ENCODE measurements at regions of chr7 and their contacts with region 1.

Region 1: DNA sequence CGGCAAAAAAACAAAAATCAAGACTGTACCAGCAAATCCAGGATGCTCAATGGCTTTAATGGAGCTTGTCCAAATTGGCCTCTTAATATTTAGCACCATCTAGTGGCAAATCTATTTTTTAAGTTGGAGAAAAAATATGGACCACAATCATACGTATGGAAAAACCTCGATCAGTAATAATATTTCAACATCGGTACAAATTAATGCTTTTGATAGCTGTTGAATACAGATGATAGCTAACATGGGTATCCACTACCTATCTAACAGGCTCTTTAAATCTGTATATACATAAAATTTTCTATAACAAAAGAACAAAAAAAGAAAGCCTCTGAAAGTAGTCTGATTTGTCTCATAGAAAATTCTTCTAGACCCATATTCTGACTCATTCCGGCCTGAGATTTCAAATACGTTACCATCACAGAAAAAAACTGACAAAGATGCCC is 29.2 kb downstream of the COA1 start:
- DNase-seq: no peak
- ATAC-seq: peak; percentile 42
- H3K4me3 Mint-ChIP-seq: no peak overlapping the region
- H3K27ac Mint-ChIP-seq: no peak overlapping the region
- H3K4me1 Mint-ChIP-seq: peaks cover 56% of the 10 kb centered on the region
- H3K27me3 Mint-ChIP-seq: no peaks in the 10 kb centered on the region

Region 2: DNA sequence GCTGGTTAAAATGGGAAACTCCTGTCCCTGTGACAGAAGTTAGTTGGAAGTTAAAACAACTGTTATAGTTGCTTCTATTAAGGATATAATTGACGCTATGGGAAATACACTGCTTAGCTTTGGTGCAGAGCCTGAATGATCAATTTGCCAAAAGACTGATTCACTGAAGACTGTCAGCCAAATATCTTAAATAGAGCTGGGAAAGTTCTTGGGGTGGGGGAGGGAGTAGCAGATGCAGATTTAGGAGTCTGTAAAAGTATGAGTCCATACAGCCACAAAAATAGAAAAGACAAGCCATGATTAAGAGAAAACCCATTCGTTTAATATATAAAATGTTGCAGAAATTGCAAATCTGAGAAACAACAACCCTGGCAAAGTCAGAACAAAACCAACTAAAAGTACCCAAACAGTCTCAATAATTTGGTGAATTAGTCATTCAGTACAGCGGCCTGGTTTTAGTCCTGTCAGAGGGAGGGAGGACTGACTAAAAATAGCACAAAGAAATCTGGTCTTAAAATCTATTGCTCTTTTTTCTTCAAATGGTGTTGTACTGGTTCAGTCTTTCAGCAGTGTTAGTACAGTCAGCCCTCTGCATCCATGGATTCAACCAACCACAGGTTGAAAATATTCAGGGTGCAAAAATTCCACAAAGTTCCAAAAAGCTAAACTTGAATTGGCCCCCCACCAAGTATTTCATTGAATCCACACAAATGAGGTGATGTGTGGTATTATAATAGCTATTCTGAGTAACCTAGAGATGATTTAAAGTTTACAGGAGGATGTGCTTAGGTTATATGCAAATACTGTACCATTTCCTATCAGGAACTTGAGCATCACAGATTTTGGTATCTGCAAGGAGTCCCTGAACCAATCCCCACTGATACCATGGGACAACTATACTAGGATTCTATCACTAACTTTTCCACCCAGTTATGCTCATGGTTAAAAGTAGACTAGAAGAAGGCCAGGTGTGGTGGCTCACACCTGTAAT is 87.2 kb before region 1 on chr7:
- CTCF ChIA-PET with region 1: interaction called, 16 read pairs
- POLR2A ChIA-PET with region 1: no interaction called
- intact Hi-C with region 1: no loop called
- DNase-seq: peak; percentile 33
- ATAC-seq: peak; percentile 86
- H3K4me3 Mint-ChIP-seq: peak overlapping the region; percentile 10
- H3K27ac Mint-ChIP-seq: peak overlapping the region; percentile 87
- H3K4me1 Mint-ChIP-seq: peaks cover 73% of the 10 kb centered on the region
- H3K27me3 Mint-ChIP-seq: no peaks in the 10 kb centered on the region

Region 3: GRCh38 chr7:43625453-43625852 is 74.6 kb before region 1 on chr7:
- CTCF ChIA-PET with region 1: interaction called, 19 read pairs
- POLR2A ChIA-PET with region 1: interaction called, 5 read pairs
- intact Hi-C with region 1: loop called in 1 of 2 experiments (anchors 2 kb)
- DNase-seq: peak; percentile 60
- ATAC-seq: peak; percentile 62
- H3K4me3 Mint-ChIP-seq: peak overlapping the region; percentile 7
- H3K27ac Mint-ChIP-seq: peak overlapping the region; percentile 63
- H3K4me1 Mint-ChIP-seq: peaks cover 91% of the 10 kb centered on the region
- H3K27me3 Mint-ChIP-seq: no peaks in the 10 kb centered on the region

Region 4: GRCh38 chr7:43639858-43640491 is 60.1 kb before region 1 on chr7:
- CTCF ChIA-PET with region 1: interaction called, 23 read pairs
- POLR2A ChIA-PET with region 1: interaction called, 4 read pairs
- intact Hi-C with region 1: no loop called
- DNase-seq: no peak
- ATAC-seq: no peak
- H3K4me3 Mint-ChIP-seq: no peak overlapping the region
- H3K27ac Mint-ChIP-seq: peak overlapping the region; percentile 76
- H3K4me1 Mint-ChIP-seq: peaks cover 90% of the 10 kb centered on the region
- H3K27me3 Mint-ChIP-seq: no peaks in the 10 kb centered on the region

Region 5: DNA sequence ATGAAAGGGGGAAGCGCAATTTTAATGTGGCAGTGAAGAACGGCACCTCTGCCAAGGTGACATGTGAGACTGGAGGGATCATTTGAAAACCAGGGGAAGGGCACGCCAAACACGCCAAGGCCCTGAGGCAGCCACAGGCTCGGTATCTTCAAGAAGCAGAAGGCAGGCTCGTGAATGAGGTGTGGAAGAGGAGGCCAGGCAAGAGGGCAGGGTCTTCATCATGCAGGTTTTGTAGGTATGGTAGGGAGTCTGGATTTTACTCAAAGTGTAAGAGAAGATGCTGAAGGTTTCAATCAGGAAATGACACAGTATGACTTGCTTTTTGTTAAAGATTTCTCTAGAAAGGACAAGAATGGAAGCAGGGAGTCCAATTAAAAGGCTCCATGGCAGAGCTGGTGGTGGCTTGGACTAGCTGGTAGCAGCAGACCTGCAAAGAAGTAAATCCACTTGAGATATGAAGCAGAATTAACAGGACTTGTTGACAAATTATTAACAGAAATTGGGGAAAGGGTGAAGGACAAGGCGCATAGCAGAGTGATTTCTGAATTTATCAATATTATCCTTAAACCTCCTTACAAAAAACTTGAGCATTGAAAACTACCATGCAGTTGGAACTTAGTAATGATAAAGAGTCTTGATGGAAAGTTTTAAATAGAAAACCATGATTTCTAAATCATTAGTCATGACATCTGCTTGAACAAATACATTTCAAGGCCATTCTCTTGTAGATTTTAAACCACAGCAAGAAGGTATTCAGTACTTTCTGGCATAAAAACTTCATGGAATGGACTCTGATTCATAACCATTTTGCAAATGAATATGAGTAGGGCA is 41.1 kb before region 1 on chr7:
- CTCF ChIA-PET with region 1: interaction called, 8 read pairs
- POLR2A ChIA-PET with region 1: no interaction called
- intact Hi-C with region 1: loop called in 1 of 2 experiments (anchors 2 kb)
- DNase-seq: peak; percentile 73
- ATAC-seq: peak; percentile 98
- H3K4me3 Mint-ChIP-seq: peak overlapping the region; percentile 34
- H3K27ac Mint-ChIP-seq: peak overlapping the region; percentile 96
- H3K4me1 Mint-ChIP-seq: peaks cover 70% of the 10 kb centered on the region
- H3K27me3 Mint-ChIP-seq: no peaks in the 10 kb centered on the region

Region 6: DNA sequence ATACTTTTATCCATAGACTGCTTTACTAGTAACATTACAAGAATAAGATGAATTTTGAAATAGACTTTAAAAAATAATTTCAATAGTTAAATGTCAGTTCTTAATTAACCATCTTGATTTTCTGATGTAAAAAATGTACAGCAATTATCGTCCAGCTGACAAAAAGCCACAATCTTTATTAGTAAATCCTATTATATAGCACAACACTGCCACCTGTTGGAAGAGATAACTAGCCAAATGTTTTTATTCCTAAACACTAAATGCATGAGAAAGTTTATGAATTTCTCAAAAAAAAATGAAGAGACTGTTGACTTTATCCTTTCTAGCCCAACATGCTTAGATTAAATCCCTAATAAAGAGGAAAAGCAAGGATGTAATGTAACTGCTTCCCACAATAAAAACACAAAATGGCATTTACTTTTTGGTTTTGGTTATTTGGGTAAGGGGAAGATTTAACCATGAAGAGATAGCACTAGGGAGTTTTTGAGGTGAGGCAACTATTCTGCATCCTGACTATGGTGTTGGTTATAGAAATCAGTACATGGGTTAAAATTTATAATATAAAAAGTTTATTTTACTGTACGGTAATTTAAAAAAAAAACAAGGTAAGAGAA is 21.2 kb after region 1 on chr7:
- CTCF ChIA-PET with region 1: interaction called, 53 read pairs
- POLR2A ChIA-PET with region 1: no interaction called
- intact Hi-C with region 1: loop called in 1 of 2 experiments (anchors 2 kb)
- DNase-seq: no peak
- ATAC-seq: no peak
- H3K4me3 Mint-ChIP-seq: no peak overlapping the region
- H3K27ac Mint-ChIP-seq: peak overlapping the region; percentile 52
- H3K4me1 Mint-ChIP-seq: peaks cover 41% of the 10 kb centered on the region
- H3K27me3 Mint-ChIP-seq: no peaks in the 10 kb centered on the region

Region 7: DNA sequence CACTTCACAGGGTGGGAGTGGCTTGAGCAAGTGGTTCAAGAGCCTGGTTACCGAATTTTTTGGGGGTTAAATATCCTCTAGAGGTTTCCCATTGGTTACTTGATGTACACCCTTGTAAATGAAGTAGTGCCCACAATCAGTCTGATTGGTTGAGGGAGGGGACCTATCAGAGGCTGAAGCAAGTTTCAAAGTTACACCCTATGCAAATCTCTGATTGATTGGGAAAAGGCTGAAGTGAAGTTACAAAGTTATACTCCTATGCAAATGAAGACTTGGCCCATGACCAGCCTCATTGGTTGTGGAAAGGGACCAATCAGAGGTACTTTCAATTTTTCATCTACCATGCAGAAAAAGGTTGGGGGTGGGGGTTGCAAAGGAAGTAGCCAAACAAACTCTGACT is 260.9 kb after region 1 on chr7:
- CTCF ChIA-PET with region 1: no interaction called
- POLR2A ChIA-PET with region 1: no interaction called
- intact Hi-C with region 1: no loop called
- DNase-seq: no peak
- ATAC-seq: no peak
- H3K4me3 Mint-ChIP-seq: no peak overlapping the region
- H3K27ac Mint-ChIP-seq: no peak overlapping the region
- H3K4me1 Mint-ChIP-seq: peaks cover 6% of the 10 kb centered on the region
- H3K27me3 Mint-ChIP-seq: no peaks in the 10 kb centered on the region